ENCODE measurements at regions of chr6 and their contacts with region 1.

Region 1: GRCh38 chr6:39309942-39310531 is 4.2 kb downstream of the KCNK17 start:
- DNase-seq: no peak
- H3K4me3 ChIP-seq: no peak overlapping the region
- H3K27ac ChIP-seq: no peak overlapping the region
- H3K4me1 ChIP-seq: peaks cover 12 to 21% (median 16%) of the 10 kb centered on the region in 3 donors
- H3K27me3 ChIP-seq: peaks cover 7 to 58% (median 18%) of the 10 kb centered on the region in 4 donors
- CTCF ChIP-seq: peak; percentile 76 to 93 (median 88)
- POLR2A ChIP-seq: no peak

Region 2: GRCh38 chr6:38871741-38872568 is 438.1 kb before region 1 on chr6:
- intact Hi-C with region 1: loop called (anchors 5 kb)
- DNase-seq: no peak
- H3K4me3 ChIP-seq: no peak overlapping the region
- H3K27ac ChIP-seq: no peak overlapping the region
- H3K4me1 ChIP-seq: no peaks in the 10 kb centered on the region
- H3K27me3 ChIP-seq: peaks cover 0 to 20% (median 0%) of the 10 kb centered on the region in 4 donors
- CTCF ChIP-seq: peak; percentile 51 to 81 (median 79)
- POLR2A ChIP-seq: no peak

Region 3: GRCh38 chr6:38973178-38974054 is 336.6 kb before region 1 on chr6:
- intact Hi-C with region 1: loop called (anchors 10 kb)
- DNase-seq: no peak
- H3K4me3 ChIP-seq: no peak overlapping the region
- H3K27ac ChIP-seq: no peak overlapping the region
- H3K4me1 ChIP-seq: no peaks in the 10 kb centered on the region
- H3K27me3 ChIP-seq: peaks cover 0 to 41% (median 0%) of the 10 kb centered on the region in 4 donors
- CTCF ChIP-seq: peak in 5 of 6 experiments; percentile 33 to 73 (median 59)
- POLR2A ChIP-seq: no peak